Right lobe of liver (tissue), 6 donors: ENCODE measurements at regions of chr18 and their contacts with region 1.

Region 1: DNA sequence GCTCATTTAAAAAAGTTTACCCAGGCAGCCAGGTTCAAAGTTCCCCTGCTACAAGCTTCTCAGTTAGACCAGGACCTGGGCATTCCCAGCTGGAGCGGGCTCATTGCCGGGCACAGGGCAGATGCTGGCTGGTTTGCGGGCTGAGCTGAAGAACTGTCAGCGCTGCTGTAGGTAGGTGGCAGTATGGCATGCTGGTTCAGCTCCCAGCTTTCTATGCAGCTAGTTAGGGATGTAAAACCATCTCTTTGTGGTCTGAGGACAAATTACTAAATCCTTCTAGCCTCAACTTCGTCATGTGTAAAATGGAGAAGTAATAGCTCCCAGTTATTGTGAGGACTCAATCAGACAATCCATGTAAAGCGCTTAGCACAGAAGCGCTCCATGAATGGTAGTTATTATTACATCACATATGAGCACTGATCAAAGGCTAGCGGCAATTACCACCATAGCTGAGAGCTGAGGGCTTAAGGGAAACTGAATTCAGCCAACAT is 2.4 kb upstream of the LDLRAD4 start:
- DNase-seq: peak; percentile 89 to 95 (median 94)
- ATAC-seq: peak; percentile 84 to 90 (median 88)
- H3K4me3 ChIP-seq: peak overlapping the region in 1 of 3 donors; percentile 84
- H3K27ac ChIP-seq: peak overlapping the region in 1 of 3 donors; percentile 72
- H3K4me1 ChIP-seq: peaks cover 0 to 29% (median 12%) of the 10 kb centered on the region in 4 donors
- H3K27me3 ChIP-seq: no peaks in the 10 kb centered on the region
- CTCF ChIP-seq: peak; percentile 77 to 87 (median 86)
- POLR2A ChIP-seq: peak; percentile 31

Region 2: GRCh38 chr18:13095466-13095865 is 120.7 kb before region 1 on chr18:
- intact Hi-C with region 1: no loop called
- DNase-seq: no peak
- ATAC-seq: no peak
- H3K4me3 ChIP-seq: no peak overlapping the region
- H3K27ac ChIP-seq: no peak overlapping the region
- H3K4me1 ChIP-seq: no peaks in the 10 kb centered on the region
- H3K27me3 ChIP-seq: no peaks in the 10 kb centered on the region
- CTCF ChIP-seq: no peak
- POLR2A ChIP-seq: no peak

Region 3: DNA sequence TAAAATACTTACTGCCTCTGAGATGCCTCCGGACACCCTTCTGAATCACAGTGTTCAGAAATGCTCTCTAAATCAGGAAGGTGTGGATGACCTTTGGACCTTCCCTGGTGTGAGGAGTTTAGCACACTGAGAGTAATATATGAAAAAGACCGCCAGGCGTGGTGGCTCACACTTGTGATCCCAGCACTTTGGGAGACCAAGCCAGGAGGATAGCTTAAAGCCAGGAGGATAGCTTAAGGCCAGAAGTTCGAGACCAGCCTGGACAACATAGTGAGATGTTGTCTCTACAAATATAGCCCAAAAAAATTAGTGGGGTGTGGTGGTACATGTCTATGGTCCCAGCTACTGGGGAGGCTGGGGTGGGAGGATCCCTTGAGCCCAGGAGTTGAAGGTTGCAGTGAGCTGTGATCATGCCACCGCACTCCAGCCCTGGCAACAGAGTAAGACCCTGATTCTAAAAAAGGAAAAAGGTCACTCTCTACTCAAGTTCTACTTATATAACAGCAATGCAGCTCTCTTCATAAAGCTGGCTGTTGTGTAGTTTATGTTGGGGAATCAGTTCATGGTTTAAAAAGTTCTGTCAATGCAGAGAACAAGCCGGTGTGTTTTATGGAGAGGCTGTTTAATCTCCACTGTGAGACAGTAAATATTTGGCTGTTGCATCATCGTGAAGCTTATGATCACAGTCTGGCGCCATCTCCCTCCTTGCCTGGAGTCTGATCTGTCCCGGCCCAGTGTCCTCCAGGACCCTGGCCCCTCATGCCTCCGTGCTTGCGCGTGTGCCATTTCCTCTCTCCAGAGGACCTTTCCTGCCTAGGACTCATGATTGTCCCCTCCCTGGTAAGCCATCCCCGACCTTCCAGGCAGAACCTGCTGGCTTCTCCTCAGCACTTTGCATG is 325.7 kb after region 1 on chr18:
- intact Hi-C with region 1: loop called in 1 of 2 experiments (anchors 5 kb)
- DNase-seq: peak in 2 of 3 donors; percentile 64 to 73
- ATAC-seq: peak; percentile 85 to 88 (median 86)
- H3K4me3 ChIP-seq: peak overlapping the region in 1 of 3 donors; percentile 2
- H3K27ac ChIP-seq: peak overlapping the region in 1 of 3 donors; percentile 46
- H3K4me1 ChIP-seq: peaks cover 0 to 45% (median 21%) of the 10 kb centered on the region in 4 donors
- H3K27me3 ChIP-seq: no peaks in the 10 kb centered on the region
- CTCF ChIP-seq: no peak
- POLR2A ChIP-seq: no peak